B cell (primary cell): ENCODE measurements at regions of chr16 and their contacts with region 1.

Region 1: DNA sequence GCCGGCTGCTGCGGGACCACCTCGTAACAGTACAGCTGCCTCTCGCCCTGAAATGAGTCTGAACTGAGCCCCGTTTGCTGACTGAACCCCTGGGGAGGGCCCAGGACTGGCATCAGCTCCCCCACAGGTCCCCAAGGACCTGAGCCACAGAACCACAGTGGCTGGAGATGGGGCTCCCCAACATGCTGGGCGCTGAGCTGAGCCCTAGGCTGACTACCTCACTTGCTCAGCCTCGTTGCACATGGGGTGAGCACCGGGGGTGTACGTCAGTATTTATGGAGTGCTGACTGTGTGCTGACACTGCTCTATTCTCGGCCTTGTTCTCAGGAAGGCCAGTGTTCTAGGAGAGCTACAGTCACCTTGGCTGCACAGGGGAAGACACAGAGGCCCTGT is 6.6 kb upstream of the VASN start:
- DNase-seq: peak; percentile 86
- ATAC-seq: peak; percentile 89
- H3K4me3 ChIP-seq: no peak overlapping the region
- H3K4me3 Mint-ChIP-seq: peak overlapping the region; percentile 64
- H3K27ac ChIP-seq: peak overlapping the region; percentile 27 to 37
- H3K27ac Mint-ChIP-seq: peak overlapping the region; percentile 78
- H3K4me1 ChIP-seq: peaks cover 6 to 42% of the 10 kb centered on the region in 2 donors
- H3K4me1 Mint-ChIP-seq: peaks cover 25% of the 10 kb centered on the region
- H3K27me3 ChIP-seq: no peaks in the 10 kb centered on the region
- H3K27me3 Mint-ChIP-seq: no peaks in the 10 kb centered on the region
- CTCF ChIP-seq: no peak

Region 2: GRCh38 chr16:4425378-4426020 is 60.5 kb after region 1 on chr16 and contains the start of gene DNAJA3:
- CTCF ChIA-PET with region 1: interaction called, 3 read pairs
- POLR2A ChIA-PET with region 1: interaction called, 5 read pairs
- intact Hi-C with region 1: loop called (anchors 1 kb)
- DNase-seq: peak; percentile 98
- ATAC-seq: peak; percentile 92
- H3K4me3 ChIP-seq: peak within 1 kb of the TSS; percentile 80 to 99 (median 89)
- H3K4me3 Mint-ChIP-seq: peak within 1 kb of the TSS; percentile 97
- H3K27ac ChIP-seq: peak within 1 kb of the TSS; percentile 93 to 96
- H3K27ac Mint-ChIP-seq: peak within 1 kb of the TSS; percentile 100
- H3K4me1 ChIP-seq: peaks cover 14 to 20% of the 10 kb centered on the region in 2 donors
- H3K4me1 Mint-ChIP-seq: peaks cover 25% of the 10 kb centered on the region
- H3K27me3 ChIP-seq: no peaks in the 10 kb centered on the region
- H3K27me3 Mint-ChIP-seq: no peaks in the 10 kb centered on the region
- CTCF ChIP-seq: no peak
- total RNA-seq, gene DNAJA3: 59.3 and 68.1 TPM in 2 replicates